Adrenal gland (tissue), 19 donors: ENCODE measurements at regions of chr5 and their contacts with region 1.

Region 1: GRCh38 chr5:124605541-124605940 is 140.9 kb downstream of the ZNF608 start:
- DNase-seq: peak in 4 of 7 donors; percentile 10 to 60 (median 16)
- H3K4me3 ChIP-seq: no peak overlapping the region
- H3K27ac ChIP-seq: no peak overlapping the region
- H3K4me1 ChIP-seq: no peaks in the 10 kb centered on the region
- H3K27me3 ChIP-seq: no peaks in the 10 kb centered on the region
- CTCF ChIP-seq: no peak
- POLR2A ChIP-seq: no peak

Region 2: DNA sequence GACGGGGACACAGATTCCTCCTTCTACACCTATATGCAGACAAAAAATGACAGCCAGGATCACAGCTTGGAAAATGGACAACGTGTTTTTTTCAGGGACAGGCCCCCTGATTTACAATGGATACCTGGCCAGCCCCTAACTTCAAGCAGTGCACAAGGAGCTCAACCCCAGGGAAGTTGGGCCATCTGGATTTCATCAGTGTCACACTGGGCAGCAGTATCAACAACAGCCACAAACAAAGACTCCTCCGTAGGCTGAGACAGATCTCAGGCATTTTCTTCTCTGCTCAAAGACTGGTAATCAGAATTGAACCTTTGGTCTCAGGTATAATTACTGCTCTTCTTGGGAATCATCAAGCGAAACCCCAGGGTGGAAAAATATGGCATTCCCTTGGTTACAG is 233.1 kb before region 1 on chr5:
- intact Hi-C with region 1: no loop called
- DNase-seq: no peak
- H3K4me3 ChIP-seq: no peak overlapping the region
- H3K27ac ChIP-seq: no peak overlapping the region
- H3K4me1 ChIP-seq: peaks cover 10 to 13% of the 10 kb centered on the region in 2 donors
- H3K27me3 ChIP-seq: no peaks in the 10 kb centered on the region
- CTCF ChIP-seq: no peak
- POLR2A ChIP-seq: no peak

Region 3: DNA sequence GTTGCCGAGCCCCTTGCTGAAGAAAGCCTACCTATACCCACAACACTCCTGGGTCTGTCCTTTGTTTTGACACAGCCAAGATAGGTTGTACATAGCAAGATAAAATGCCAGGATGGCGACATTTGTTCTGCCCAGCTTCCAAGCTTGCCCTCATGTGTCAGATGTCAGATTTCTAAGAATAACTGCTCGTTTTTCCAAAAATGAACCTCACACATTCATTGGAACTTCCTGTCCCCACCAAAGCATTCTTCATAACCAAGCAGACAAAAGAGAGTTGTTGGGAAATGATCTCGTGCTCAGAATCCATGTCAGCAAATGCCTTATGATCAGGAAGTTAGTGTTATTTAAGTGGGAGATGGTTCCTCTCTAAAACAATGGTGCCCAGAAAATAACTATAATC is 69.2 kb before region 1 on chr5:
- intact Hi-C with region 1: loop called in 1 of 2 experiments (anchors 10 kb)
- DNase-seq: no peak
- H3K4me3 ChIP-seq: no peak overlapping the region
- H3K27ac ChIP-seq: peak overlapping the region in 1 of 5 donors; percentile 29
- H3K4me1 ChIP-seq: no peaks in the 10 kb centered on the region
- H3K27me3 ChIP-seq: no peaks in the 10 kb centered on the region
- CTCF ChIP-seq: no peak
- POLR2A ChIP-seq: no peak